ENCODE measurements at regions of chr4 and their contacts with region 1.

Region 1: DNA sequence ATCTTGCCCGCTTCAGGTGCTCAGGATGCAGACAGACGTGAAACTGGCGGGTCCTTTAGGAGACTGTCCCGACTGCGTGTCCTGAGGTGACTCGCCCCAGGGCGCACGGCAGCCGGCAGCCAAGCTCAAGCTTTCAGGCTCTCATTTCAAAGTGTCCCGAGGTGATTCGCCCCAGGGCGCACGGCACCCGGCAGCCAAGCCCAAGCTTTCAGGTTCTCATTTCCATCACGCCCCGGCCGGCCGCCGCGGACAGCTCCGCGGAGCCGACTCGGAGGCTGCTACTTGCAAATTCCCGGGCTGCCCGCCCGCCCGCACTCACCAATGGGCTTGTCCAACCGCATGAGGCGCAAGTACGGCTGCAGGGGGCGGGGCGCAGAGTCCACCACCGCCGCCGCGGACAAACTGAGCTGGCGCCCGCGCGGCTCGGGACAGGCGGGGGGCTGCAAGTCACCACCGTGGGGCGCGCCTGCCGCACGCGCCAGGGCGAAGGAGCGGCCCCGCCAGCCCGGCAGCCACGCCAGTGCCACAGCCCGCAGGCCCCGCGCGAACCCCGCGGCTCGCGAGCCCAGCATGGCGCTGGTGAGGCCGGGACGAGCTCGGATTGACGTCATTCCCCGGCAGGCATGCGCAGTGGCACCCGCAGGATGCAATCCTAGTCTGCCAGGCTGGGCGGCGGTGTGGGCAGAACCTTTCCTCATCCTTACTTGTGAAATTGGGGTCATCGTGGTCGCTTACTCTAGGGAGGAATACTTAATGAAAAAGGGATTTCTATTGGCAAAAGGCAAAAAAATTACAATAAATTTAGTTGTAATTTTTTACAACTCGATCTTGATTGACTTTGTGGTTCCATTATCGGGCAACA is at the start of gene COQ2:
- DNase-seq: peak; percentile 97 to 98 (median 97)
- ATAC-seq: peak; percentile 94
- H3K4me3 ChIP-seq: peak within 1 kb of the TSS; percentile 50
- H3K4me1 ChIP-seq: peaks cover 10% of the 10 kb centered on the region
- CTCF ChIP-seq: peak; percentile 31
- total RNA-seq, gene COQ2: 12.5 to 21.6 (median 18.1) TPM

Region 2: GRCh38 chr4:82890901-82891706 is 393.3 kb before region 1 on chr4 and contains the start of gene SEC31A:
- intact Hi-C with region 1: loop called in 1 of 2 experiments (anchors 10 kb)
- DNase-seq: peak; percentile 98 to 99 (median 98)
- ATAC-seq: peak; percentile 98
- H3K4me3 ChIP-seq: peak within 1 kb of the TSS; percentile 74
- H3K4me1 ChIP-seq: peaks cover 25% of the 10 kb centered on the region
- CTCF ChIP-seq: no peak
- total RNA-seq, gene SEC31A: 167 to 179 (median 176) TPM

Region 3: GRCh38 chr4:83138946-83139345 is 145.5 kb before region 1 on chr4:
- intact Hi-C with region 1: no loop called
- DNase-seq: peak in 1 of 3 donors; percentile 25
- ATAC-seq: peak; percentile 34
- H3K4me3 ChIP-seq: no peak overlapping the region
- H3K4me1 ChIP-seq: no peaks in the 10 kb centered on the region
- CTCF ChIP-seq: no peak